Endothelial cell of umbilical vein (primary cell): ENCODE measurements at regions of chr20 and their contacts with region 1.

Region 1: GRCh38 chr20:47379433-47380150 is 23.1 kb upstream of the ZMYND8 start:
- DNase-seq: no peak
- H3K4me3 ChIP-seq: no peak overlapping the region
- H3K27ac ChIP-seq: no peak overlapping the region
- H3K4me1 ChIP-seq: peaks cover 5% of the 10 kb centered on the region
- H3K27me3 ChIP-seq: no peaks in the 10 kb centered on the region
- CTCF ChIP-seq: no peak
- POLR2A ChIP-seq: no peak

Region 2: GRCh38 chr20:47205577-47206498 is 173.8 kb before region 1 on chr20:
- CTCF ChIA-PET with region 1: interaction called, 94 read pairs
- POLR2A ChIA-PET with region 1: no interaction called
- dilution Hi-C with region 1: no loop called
- intact Hi-C with region 1: loop called (anchors 1 kb)
- DNase-seq: peak; percentile 64
- H3K4me3 ChIP-seq: no peak overlapping the region
- H3K27ac ChIP-seq: no peak overlapping the region
- H3K4me1 ChIP-seq: peaks cover 7% of the 10 kb centered on the region
- H3K27me3 ChIP-seq: no peaks in the 10 kb centered on the region
- CTCF ChIP-seq: peak; percentile 73 to 81
- POLR2A ChIP-seq: no peak

Region 3: DNA sequence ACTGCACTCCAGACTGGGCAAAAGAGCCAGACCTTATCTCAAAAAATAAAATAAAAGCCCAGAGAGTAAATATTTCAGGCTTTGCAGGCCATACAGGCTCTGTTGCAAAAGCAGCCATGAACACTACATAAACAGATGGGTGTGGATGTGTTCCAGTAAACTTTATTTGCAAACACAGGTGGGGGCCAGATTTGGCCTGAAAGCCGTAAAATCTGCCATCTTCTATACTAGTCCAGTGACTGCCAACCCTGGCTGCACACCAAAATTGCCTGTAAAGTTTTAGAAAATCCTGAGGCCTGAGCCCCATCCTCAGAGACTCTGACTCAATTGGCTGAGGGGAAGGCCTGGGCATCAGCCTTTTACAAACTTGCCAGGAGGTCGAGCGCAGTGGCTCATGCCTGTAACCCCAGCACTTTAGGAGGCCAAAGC is 126.7 kb before region 1 on chr20:
- CTCF ChIA-PET with region 1: interaction called, 21 read pairs
- POLR2A ChIA-PET with region 1: no interaction called
- dilution Hi-C with region 1: no loop called
- intact Hi-C with region 1: no loop called
- DNase-seq: no peak
- H3K4me3 ChIP-seq: no peak overlapping the region
- H3K27ac ChIP-seq: no peak overlapping the region
- H3K4me1 ChIP-seq: peaks cover 4% of the 10 kb centered on the region
- H3K27me3 ChIP-seq: no peaks in the 10 kb centered on the region
- CTCF ChIP-seq: no peak
- POLR2A ChIP-seq: no peak

Region 4: DNA sequence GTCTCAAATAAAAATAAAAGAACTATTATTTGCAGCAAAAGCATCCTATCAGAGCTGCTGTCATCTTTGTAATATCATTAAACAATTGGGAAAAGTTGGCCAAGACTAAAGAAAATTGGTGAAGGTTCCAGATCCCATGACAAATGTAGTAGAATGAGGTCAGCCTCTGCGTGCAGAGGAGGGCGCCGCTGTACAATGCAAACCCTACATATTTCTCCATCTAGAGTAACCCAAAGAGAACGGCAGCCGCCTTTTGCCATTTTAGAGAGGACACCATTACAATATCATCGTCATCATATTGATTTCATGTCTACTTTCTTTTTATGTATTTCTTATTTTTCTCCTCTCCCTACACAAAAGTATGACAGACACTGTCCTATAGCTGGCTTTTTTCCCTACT is 82.6 kb before region 1 on chr20:
- CTCF ChIA-PET with region 1: interaction called, 139 read pairs
- POLR2A ChIA-PET with region 1: no interaction called
- dilution Hi-C with region 1: no loop called
- intact Hi-C with region 1: loop called (anchors 1 kb)
- DNase-seq: no peak
- H3K4me3 ChIP-seq: no peak overlapping the region
- H3K27ac ChIP-seq: no peak overlapping the region
- H3K4me1 ChIP-seq: peaks cover 2% of the 10 kb centered on the region
- H3K27me3 ChIP-seq: no peaks in the 10 kb centered on the region
- CTCF ChIP-seq: no peak
- POLR2A ChIP-seq: peak; percentile 32

Region 5: DNA sequence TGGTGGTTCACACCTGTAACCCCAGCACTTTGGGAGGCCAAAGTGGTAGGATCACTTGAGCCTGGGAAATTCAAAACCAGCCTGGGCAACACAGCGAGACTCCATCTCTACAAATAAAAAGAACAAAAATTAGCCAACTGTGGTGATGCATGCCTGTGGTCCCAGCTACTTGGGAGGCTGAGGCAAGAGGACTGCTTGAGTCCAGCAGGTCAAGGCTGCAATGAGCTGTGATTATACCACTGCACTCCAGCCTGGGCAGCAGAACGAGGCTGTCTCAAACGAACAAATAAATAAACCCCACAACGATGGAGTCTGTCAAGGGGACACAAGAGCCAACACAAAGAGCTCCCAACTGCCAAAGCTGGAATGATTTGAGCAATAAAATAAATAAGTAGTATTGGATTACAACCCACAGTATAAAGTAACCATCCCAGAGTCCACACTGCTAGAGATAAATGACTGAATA is 36.6 kb before region 1 on chr20:
- CTCF ChIA-PET with region 1: interaction called, 21 read pairs
- POLR2A ChIA-PET with region 1: no interaction called
- dilution Hi-C with region 1: no loop called
- intact Hi-C with region 1: no loop called
- DNase-seq: no peak
- H3K4me3 ChIP-seq: no peak overlapping the region
- H3K27ac ChIP-seq: no peak overlapping the region
- H3K4me1 ChIP-seq: peaks cover 6% of the 10 kb centered on the region
- H3K27me3 ChIP-seq: no peaks in the 10 kb centered on the region
- CTCF ChIP-seq: no peak
- POLR2A ChIP-seq: no peak

Region 6: DNA sequence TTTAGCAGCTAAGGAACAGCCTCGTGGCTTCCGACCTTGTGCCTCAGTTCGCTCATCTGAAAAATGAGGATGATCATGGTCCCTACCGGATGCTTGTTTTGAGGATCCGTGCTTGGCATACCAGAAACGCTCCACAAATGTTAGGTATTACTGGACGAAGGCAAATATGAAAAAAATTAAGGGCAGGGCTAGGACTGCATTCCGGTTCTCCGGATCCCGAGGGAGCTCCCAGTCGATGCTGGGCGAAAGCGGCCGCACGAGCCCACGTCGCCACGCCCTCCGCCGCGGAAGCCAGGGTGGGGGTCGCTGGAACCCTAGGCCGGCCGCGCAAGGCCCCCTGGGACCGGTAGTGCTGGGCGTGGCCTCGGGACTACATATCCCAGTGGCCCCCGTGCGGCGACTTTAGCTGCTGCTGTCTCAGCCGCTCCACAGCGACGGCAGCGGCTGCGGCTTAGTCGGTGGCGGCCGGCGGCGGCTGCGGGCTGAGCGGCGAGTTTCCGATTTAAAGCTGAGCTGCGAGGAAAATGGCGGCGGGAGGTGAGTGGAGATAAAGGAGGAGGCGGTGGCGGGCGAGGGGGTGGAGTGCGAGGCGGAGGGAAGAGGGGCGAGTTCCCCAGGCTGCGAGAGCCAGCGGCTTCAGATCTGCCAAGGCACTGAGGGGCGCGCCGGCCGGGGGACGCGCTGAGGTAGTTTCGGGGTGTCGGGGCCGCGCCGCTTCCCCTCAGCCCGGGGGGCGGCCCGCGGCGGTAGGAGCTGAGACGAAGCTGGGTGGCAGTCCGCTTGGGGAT is 122.1 kb after region 1 on chr20 and contains the start of gene NCOA3:
- CTCF ChIA-PET with region 1: interaction called, 22 read pairs
- POLR2A ChIA-PET with region 1: interaction called, 4 read pairs
- dilution Hi-C with region 1: no loop called
- intact Hi-C with region 1: loop called (anchors 1 kb)
- DNase-seq: peak; percentile 92
- H3K4me3 ChIP-seq: peak within 1 kb of the TSS; percentile 80 to 94 (median 93)
- H3K27ac ChIP-seq: peak within 1 kb of the TSS; percentile 71
- H3K4me1 ChIP-seq: peaks cover 19% of the 10 kb centered on the region
- H3K27me3 ChIP-seq: no peaks in the 10 kb centered on the region
- CTCF ChIP-seq: peak; percentile 17 to 66
- POLR2A ChIP-seq: peak; percentile 96
- total RNA-seq, gene NCOA3: 26.7 and 35.6 TPM in 2 replicates